ENCODE measurements at regions of chr17 and their contacts with region 1.

Region 1: GRCh38 chr17:75845049-75845860 is 1.1 kb upstream of the UNC13D start:
- DNase-seq: peak; percentile 91 to 92
- ATAC-seq: peak; percentile 69 to 87
- H3K4me3 ChIP-seq: peak overlapping the region; percentile 0; the same call in 1 of the 3 replicates
- H3K27ac ChIP-seq: peak overlapping the region; percentile 79 to 89
- H3K4me1 ChIP-seq: peaks cover 43% of the 10 kb centered on the region
- CTCF ChIP-seq: peak; percentile 49
- EP300 ChIP-seq: no peak
- POLR2A ChIP-seq: no peak
- RAD21 ChIP-seq: peak in 1 of 2 experiments; percentile 23; a peak in 1 of 5 replicates

Region 2: DNA sequence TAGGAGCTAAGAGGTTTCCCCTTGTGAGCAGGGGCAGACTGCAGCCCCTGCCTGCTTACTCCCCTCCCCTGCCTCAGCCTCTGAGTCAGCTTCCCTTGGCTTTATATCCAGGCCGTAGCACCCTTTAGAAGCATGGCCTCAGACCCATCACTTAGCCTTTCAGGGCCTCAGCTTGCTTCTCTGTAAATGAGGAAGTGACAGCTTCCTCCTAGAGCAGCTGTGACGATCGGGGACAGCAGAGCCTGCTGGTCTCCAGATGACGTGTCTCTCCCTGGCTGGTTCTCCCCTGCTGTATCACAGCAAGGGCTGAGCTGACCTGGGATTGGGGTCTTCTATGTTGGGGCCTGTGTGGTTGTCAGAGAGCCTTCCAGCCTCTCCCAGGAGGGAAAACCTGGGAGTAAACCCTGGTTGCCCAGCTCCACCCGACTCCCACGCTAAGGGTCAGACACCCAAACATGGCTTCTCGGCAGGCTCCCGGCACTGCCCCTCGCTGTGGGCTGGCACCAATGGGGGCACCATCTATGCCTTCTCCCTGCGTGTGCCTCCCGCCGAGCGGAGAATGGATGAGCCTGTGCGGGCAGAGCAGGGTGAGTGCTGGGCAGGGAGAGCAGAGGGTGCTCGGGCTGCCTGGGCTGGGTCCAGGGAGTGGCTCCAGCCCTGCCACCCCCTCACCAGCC is 273.9 kb before region 1 on chr17:
- CTCF ChIA-PET with region 1: no interaction called
- POLR2A ChIA-PET with region 1: no interaction called
- DNase-seq: no peak
- ATAC-seq: peak in 1 of 2 experiments; percentile 34; a peak in 3 of 6 replicates
- H3K4me3 ChIP-seq: no peak overlapping the region
- H3K27ac ChIP-seq: peak overlapping the region in 1 of 2 experiments; percentile 0; a peak in 1 of 6 replicates
- H3K4me1 ChIP-seq: no peaks in the 10 kb centered on the region
- CTCF ChIP-seq: no peak
- EP300 ChIP-seq: no peak
- POLR2A ChIP-seq: no peak
- RAD21 ChIP-seq: no peak

Region 3: DNA sequence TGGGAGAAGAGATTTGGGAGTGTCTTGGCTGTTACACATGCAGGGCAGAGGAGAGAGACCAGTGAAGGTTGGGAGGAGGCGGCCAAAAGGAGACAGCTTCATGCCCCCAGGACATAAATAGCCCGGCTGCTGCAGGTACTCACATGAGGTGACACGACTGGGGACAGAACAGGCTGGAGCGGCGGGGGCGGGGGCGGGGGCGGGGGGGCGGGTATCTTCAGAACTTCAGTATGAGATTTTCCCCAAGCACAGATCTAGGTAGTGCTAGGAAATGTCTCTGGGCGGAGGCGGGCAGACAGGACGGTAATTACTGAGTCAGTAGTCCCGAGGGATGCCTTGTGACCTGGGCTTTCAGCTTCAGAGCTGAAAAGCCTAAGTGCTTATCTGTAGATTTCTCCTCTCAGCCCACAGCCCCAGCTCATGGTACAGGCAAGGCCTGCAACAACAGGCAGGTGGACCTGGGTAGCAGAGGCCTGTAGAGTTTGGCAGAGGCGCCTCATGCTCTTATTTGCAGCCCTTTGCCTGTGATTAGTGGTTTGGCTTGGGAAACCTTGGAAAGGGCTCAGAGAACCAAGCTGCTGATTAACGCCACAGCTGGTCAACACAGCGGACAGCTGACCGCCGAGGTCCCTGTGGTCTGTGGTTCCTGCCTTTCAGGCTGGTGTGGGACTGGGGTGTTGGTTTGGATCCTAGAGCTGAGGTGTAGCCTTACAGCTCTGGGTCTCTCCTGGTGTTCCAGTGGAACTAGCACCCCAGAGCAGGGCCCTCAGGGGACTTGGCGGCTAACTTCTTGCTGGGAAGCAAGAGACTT is 36.1 kb before region 1 on chr17:
- CTCF ChIA-PET with region 1: interaction called, 691 read pairs
- POLR2A ChIA-PET with region 1: no interaction called
- DNase-seq: no peak
- ATAC-seq: peak in 1 of 2 experiments; percentile 13; a peak in 3 of 6 replicates
- H3K4me3 ChIP-seq: no peak overlapping the region
- H3K27ac ChIP-seq: no peak overlapping the region
- H3K4me1 ChIP-seq: no peaks in the 10 kb centered on the region
- CTCF ChIP-seq: no peak
- EP300 ChIP-seq: no peak
- POLR2A ChIP-seq: no peak
- RAD21 ChIP-seq: no peak

Region 4: DNA sequence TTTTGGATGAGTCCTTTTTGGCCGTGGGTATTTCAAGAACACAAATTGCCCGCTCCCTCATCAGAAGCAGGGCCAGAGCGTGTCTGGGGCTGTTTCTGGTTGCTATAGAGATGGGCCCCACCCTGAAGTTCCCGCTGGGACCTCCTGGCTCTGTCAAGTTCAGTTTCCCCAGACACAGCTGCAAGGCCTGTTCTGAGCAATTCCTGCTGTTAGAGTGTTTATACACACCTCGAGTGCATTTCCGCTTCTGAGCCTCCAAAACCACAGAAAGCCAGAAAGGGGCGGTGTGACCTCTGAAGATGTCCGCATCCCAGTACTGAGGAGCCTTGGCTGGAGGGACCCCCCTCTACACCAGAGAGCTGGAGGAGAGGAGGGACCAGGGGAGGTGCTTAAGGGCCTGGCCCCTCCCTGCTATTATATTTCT is 19.2 kb after region 1 on chr17:
- CTCF ChIA-PET with region 1: interaction called, 691 read pairs
- POLR2A ChIA-PET with region 1: no interaction called
- DNase-seq: no peak
- ATAC-seq: peak; percentile 23 to 28; a peak in 3 of 6 replicates
- H3K4me3 ChIP-seq: no peak overlapping the region
- H3K27ac ChIP-seq: no peak overlapping the region
- H3K4me1 ChIP-seq: peaks cover 10% of the 10 kb centered on the region
- CTCF ChIP-seq: no peak
- EP300 ChIP-seq: no peak
- POLR2A ChIP-seq: no peak
- RAD21 ChIP-seq: no peak

Region 5: GRCh38 chr17:75896415-75897159 is 51.3 kb after region 1 on chr17 and contains the start of gene TRIM65:
- CTCF ChIA-PET with region 1: interaction called, 11 read pairs
- POLR2A ChIA-PET with region 1: no interaction called
- DNase-seq: peak; percentile 69 to 83
- ATAC-seq: peak; percentile 76 to 80
- H3K4me3 ChIP-seq: peak within 1 kb of the TSS; percentile 84
- H3K27ac ChIP-seq: peak within 1 kb of the TSS; percentile 90 to 97
- H3K4me1 ChIP-seq: peaks cover 17% of the 10 kb centered on the region
- CTCF ChIP-seq: peak; percentile 59
- EP300 ChIP-seq: no peak
- POLR2A ChIP-seq: peak; percentile 95
- RAD21 ChIP-seq: peak; percentile 12 to 54; a peak in 3 of 5 replicates
- polyA plus RNA-seq, gene TRIM65: 13.5 and 17.4 TPM in 2 replicates